ENCODE measurements at regions of chr3 and their contacts with region 1.

Region 1: DNA sequence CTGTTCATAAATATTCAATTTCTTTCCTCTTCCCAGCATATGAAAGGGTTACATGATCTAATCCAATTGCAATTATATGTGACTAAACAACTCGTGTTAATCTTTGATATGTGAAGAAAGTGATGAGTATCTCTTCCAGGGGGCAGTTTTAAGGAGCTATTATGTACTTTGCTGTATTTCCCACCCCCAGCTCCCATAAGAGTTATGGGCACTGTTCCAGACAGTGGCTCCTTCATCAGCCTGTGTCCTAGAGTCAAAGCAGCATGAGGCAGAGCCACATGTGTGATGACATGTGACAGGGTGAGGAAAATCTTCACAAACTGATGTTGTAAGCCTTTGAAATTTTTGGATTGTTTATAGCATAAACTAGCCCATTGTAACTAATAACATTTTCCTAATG is 315.4 kb downstream of the DIPK2A start:
- DNase-seq: no peak
- H3K4me3 ChIP-seq: no peak overlapping the region
- H3K27ac ChIP-seq: no peak overlapping the region
- H3K4me1 ChIP-seq: no peaks in the 10 kb centered on the region
- H3K27me3 ChIP-seq: no peaks in the 10 kb centered on the region
- CTCF ChIP-seq: no peak
- POLR2A ChIP-seq: no peak

Region 2: DNA sequence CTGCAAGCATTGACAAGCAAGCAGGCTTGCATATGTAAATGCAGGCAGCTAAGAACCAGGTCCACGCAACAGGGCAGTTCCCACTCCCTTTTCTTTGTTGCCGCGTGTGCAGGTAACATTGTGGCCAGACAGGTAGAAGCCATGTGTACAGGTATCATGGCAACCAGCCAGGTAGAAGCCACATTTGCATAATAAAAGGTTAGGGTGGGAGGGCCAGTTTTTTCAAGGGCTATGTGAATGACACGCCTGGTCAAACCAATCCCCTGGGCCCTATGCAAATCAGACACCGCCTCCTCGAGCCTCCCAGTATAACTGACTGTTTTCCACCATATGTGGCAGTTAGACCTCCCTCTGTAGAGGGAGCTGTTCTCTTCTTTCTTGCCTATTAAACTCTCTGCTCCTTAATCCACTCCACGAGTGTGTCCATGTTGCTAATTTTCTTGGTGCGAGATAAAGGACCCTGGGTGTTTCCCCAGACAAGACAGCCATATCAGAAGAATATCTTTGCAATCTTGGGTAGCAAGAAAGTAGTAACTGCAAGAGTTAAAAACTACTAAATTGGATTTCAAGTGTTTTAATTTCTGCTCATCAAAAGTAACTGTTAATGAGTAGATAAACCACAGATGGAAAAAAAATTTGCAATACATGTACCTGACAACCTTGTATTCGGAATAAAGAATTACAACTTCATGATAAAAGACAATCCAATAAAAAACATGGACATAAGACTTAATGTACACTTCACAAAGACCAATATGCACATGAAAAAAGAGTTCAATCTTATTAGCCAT is 1420.0 kb before region 1 on chr3:
- intact Hi-C with region 1: loop called (anchors 10 kb)
- DNase-seq: no peak
- H3K4me3 ChIP-seq: no peak overlapping the region
- H3K27ac ChIP-seq: no peak overlapping the region
- H3K4me1 ChIP-seq: no peaks in the 10 kb centered on the region
- H3K27me3 ChIP-seq: no peaks in the 10 kb centered on the region
- CTCF ChIP-seq: no peak
- POLR2A ChIP-seq: no peak

Region 3: DNA sequence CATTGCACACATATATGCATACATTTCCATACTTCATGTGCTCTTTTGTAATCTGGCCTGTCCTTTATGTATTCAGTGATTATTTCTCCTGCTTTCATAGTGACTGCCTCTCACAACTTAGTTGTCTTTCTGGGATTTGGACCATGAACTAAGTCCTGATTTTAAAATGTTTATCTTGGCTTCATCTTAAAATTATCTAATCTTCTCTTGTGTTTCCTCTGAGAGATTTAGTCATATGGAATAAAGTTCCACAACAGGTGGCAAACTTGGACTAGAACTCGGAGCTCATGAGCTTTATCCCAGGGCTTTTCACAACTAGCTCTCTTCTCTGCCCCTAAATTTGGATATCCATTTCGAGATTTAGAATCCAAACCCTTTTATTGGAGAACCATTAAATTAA is 1241.4 kb before region 1 on chr3:
- intact Hi-C with region 1: no loop called
- DNase-seq: no peak
- H3K4me3 ChIP-seq: no peak overlapping the region
- H3K27ac ChIP-seq: no peak overlapping the region
- H3K4me1 ChIP-seq: no peaks in the 10 kb centered on the region
- H3K27me3 ChIP-seq: no peaks in the 10 kb centered on the region
- CTCF ChIP-seq: no peak
- POLR2A ChIP-seq: no peak

Region 4: DNA sequence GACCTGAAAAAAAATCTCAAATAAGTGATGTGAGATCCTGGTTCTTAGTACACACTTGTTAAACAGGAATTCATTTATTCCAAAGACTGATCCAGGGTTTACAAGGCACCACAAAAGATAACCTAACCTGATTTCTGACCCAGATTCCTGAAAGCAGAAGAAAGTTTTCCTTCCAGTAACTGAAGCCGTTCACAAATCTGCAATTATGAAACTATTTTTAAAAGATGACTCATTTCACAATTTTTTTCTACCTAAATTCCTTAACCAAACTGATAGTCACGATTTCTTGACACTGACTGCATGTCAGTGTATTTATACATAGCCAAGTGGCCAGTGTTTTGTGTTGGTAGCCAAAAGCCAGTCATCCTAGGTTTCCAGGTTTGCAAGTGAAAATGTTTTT is 455.8 kb before region 1 on chr3:
- intact Hi-C with region 1: no loop called
- DNase-seq: no peak
- H3K4me3 ChIP-seq: no peak overlapping the region
- H3K27ac ChIP-seq: peak overlapping the region; percentile 5
- H3K4me1 ChIP-seq: peaks cover 27% of the 10 kb centered on the region
- H3K27me3 ChIP-seq: no peaks in the 10 kb centered on the region
- CTCF ChIP-seq: no peak
- POLR2A ChIP-seq: no peak

Region 5: GRCh38 chr3:144142151-144142840 is 144.7 kb before region 1 on chr3:
- intact Hi-C with region 1: no loop called
- DNase-seq: no peak
- H3K4me3 ChIP-seq: no peak overlapping the region
- H3K27ac ChIP-seq: no peak overlapping the region
- H3K4me1 ChIP-seq: peaks cover 14% of the 10 kb centered on the region
- H3K27me3 ChIP-seq: no peaks in the 10 kb centered on the region
- CTCF ChIP-seq: no peak
- POLR2A ChIP-seq: no peak

Region 6: GRCh38 chr3:144229237-144229830 is 57.7 kb before region 1 on chr3:
- intact Hi-C with region 1: no loop called
- DNase-seq: no peak
- H3K4me3 ChIP-seq: no peak overlapping the region
- H3K27ac ChIP-seq: no peak overlapping the region
- H3K4me1 ChIP-seq: no peaks in the 10 kb centered on the region
- H3K27me3 ChIP-seq: no peaks in the 10 kb centered on the region
- CTCF ChIP-seq: no peak
- POLR2A ChIP-seq: no peak

Measured in vagina (tissue), 2 donors.